ENCODE measurements at regions of chr9 and their contacts with region 1.

Region 1: DNA sequence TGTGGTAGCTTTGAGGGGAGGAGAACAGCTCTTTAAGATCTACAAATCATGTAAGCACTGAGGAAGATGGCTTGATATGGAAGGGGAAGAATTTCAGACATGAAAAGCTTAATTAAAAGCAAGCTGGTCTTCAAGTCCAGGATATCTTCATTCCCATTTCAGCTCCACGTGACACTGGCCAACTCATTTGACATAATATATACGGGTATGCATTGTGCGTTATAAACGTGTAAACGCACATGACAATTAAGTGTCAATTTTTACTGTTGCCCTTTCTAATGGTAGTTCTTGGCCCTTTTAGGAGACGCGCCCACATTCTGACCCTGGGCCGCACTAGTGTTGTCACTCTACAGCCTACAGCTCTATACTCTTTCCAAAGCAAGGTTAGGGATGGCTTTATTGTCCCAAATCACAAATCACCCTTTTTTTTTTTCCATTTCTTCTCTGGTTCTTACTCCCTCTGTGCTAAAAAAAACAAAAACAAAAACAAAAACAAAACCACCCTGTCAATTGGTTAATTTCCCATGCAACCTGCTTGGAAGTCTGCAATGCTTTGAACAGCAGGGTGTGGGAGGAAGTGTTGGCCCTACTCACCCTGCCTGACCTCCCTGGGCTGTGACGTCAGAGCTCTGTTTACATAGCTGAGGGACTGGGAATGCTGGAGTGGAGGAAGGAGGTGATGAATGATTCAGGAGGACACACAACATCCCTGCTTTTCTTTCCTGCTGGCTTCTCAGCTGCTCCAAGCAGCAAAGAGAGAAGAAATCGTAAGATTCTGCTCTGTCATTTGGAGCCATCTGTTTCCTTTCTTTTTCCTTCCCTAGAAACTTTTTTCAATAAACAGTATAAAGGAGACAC is 19.3 kb downstream of the RFK start:
- DNase-seq: peak; percentile 96
- H3K4me3 ChIP-seq: no peak overlapping the region
- H3K27ac ChIP-seq: peak overlapping the region; percentile 73
- H3K4me1 ChIP-seq: peaks cover 20% of the 10 kb centered on the region
- H3K27me3 ChIP-seq: no peaks in the 10 kb centered on the region
- CTCF ChIP-seq: no peak
- POLR2A ChIP-seq: no peak

Region 2: GRCh38 chr9:76216161-76216649 is 158.7 kb before region 1 on chr9:
- CTCF ChIA-PET with region 1: no interaction called
- POLR2A ChIA-PET with region 1: no interaction called
- dilution Hi-C with region 1: no loop called
- intact Hi-C with region 1: loop called (anchors 10 kb)
- DNase-seq: peak; percentile 84
- H3K4me3 ChIP-seq: no peak overlapping the region
- H3K27ac ChIP-seq: no peak overlapping the region
- H3K4me1 ChIP-seq: peaks cover 17% of the 10 kb centered on the region
- H3K27me3 ChIP-seq: peaks cover 16 to 39% of the 10 kb centered on the region in 2 experiments
- CTCF ChIP-seq: no peak
- POLR2A ChIP-seq: no peak

Region 3: DNA sequence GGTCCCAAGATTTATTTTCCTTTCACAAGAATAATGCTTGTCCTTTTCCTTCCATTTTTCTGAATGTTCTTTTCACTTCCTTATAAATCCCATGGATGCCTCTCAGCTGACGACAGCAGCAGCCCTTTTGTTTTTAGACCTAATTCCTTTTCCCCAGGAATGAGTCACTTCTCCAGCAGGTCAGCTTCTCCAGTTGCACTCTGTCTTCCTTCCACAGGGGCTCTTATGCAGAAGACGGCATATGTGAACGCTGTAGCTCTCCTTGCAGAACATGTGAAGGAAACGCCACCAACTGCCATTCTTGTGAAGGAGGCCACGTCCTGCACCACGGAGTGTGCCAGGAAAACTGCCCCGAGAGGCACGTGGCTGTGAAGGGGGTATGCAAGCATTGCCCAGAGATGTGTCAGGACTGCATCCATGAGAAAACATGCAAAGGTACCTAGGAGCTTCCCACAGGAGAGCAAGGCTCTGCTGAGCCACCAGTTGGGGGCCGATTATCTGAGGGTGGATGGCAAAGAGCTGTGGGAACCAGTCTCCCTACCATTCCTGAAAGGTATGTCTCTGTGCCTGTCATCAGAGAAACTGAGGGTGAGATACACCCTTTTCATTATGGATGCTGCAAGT is 53.6 kb before region 1 on chr9:
- CTCF ChIA-PET with region 1: interaction called, 5 read pairs
- POLR2A ChIA-PET with region 1: no interaction called
- dilution Hi-C with region 1: no loop called
- intact Hi-C with region 1: loop called (anchors 1 kb)
- DNase-seq: peak; percentile 87
- H3K4me3 ChIP-seq: no peak overlapping the region
- H3K27ac ChIP-seq: peak overlapping the region; percentile 63
- H3K4me1 ChIP-seq: peaks cover 8% of the 10 kb centered on the region
- H3K27me3 ChIP-seq: no peaks in the 10 kb centered on the region
- CTCF ChIP-seq: no peak
- POLR2A ChIP-seq: no peak

Region 4: GRCh38 chr9:76414656-76415055 is 39.7 kb after region 1 on chr9:
- CTCF ChIA-PET with region 1: interaction called, 4 read pairs
- POLR2A ChIA-PET with region 1: no interaction called
- dilution Hi-C with region 1: no loop called
- intact Hi-C with region 1: loop called (anchors 2 kb)
- DNase-seq: peak; percentile 88
- H3K4me3 ChIP-seq: no peak overlapping the region
- H3K27ac ChIP-seq: peak overlapping the region; percentile 76
- H3K4me1 ChIP-seq: peaks cover 30% of the 10 kb centered on the region
- H3K27me3 ChIP-seq: no peaks in the 10 kb centered on the region
- CTCF ChIP-seq: no peak
- POLR2A ChIP-seq: no peak

Measured in endothelial cell of umbilical vein (primary cell).